GM12878 (cell line): ENCODE measurements at regions of chr2 and their contacts with region 1.

Region 1: GRCh38 chr2:28594289-28595108 is 98.6 kb downstream of the PLB1 start:
- DNase-seq: peak; percentile 28
- ATAC-seq: peak; percentile 94
- H3K4me3 ChIP-seq: no peak overlapping the region
- H3K27ac ChIP-seq: no peak overlapping the region
- H3K4me1 ChIP-seq: 0 out of 2 replicates have a peak, but pooled peaks cover 3% of the 10 kb centered on the region
- H3K27me3 ChIP-seq: no peaks in the 10 kb centered on the region; a peak in 1 of 4 replicates
- CTCF ChIP-seq: peak; percentile 78 to 86 (median 79)
- EP300 ChIP-seq: no peak
- POLR2A ChIP-seq: no peak
- RAD21 ChIP-seq: peak; percentile 90

Region 2: GRCh38 chr2:28566521-28567041 is 27.9 kb before region 1 on chr2:
- CTCF ChIA-PET with region 1: interaction called, 36 read pairs
- POLR2A ChIA-PET with region 1: no interaction called
- RAD21 ChIA-PET with region 1: interaction called, 10 read pairs
- SMC1A ChIA-PET with region 1: interaction called, 22 read pairs
- in situ Hi-C with region 1: no loop called
- intact Hi-C with region 1: no loop called
- DNase-seq: peak; percentile 8
- ATAC-seq: peak; percentile 99
- H3K4me3 ChIP-seq: peak overlapping the region; percentile 87
- H3K27ac ChIP-seq: no peak overlapping the region
- H3K4me1 ChIP-seq: peaks cover 3% of the 10 kb centered on the region; the same call in 1 of the 2 replicates
- H3K27me3 ChIP-seq: no peaks in the 10 kb centered on the region; a peak in 1 of 4 replicates
- CTCF ChIP-seq: peak; percentile 98 to 100 (median 100); a peak in 5 of 6 replicates
- EP300 ChIP-seq: no peak
- POLR2A ChIP-seq: no peak
- RAD21 ChIP-seq: peak; percentile 91

Region 3: DNA sequence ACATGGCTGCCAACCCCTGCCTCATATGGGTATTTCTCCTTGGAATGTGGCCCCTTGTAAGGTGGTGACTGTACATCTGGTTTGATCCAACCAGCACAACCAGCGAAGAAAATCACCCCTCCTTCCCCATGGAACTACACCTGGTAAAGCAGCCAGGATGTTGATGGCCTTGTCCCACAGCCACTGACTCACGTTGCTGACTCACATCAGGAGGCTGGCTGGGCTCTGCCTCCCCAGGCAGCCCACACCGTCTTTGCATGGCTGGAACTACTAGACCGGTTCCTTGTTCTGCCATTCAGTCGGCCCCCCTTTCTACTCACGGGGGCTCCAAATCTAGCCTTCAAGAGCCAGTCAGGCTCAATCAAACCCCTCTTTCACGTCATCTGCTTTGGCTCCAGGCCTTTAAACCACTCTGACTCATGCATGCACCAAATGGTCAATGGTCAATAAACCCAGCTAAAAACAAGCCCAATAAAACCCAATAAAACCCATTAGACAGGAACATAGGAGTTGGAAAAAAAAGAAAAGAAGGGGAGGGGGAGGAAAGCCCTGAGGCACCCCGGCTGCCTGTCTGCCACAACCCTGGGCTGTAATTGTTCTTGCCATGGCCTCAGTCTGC is 16.2 kb after region 1 on chr2:
- CTCF ChIA-PET with region 1: interaction called, 30 read pairs
- POLR2A ChIA-PET with region 1: no interaction called
- RAD21 ChIA-PET with region 1: interaction called, 3 read pairs
- SMC1A ChIA-PET with region 1: interaction called, 5 read pairs
- in situ Hi-C with region 1: no loop called
- intact Hi-C with region 1: no loop called
- DNase-seq: no peak
- ATAC-seq: peak; percentile 86
- H3K4me3 ChIP-seq: no peak overlapping the region
- H3K27ac ChIP-seq: no peak overlapping the region
- H3K4me1 ChIP-seq: no peaks in the 10 kb centered on the region
- H3K27me3 ChIP-seq: no peaks in the 10 kb centered on the region; a peak in 2 of 4 replicates
- CTCF ChIP-seq: no peak
- EP300 ChIP-seq: no peak
- POLR2A ChIP-seq: no peak
- RAD21 ChIP-seq: no peak

Region 4: GRCh38 chr2:28670866-28671265 is 76.4 kb after region 1 on chr2:
- CTCF ChIA-PET with region 1: interaction called, 10 read pairs
- POLR2A ChIA-PET with region 1: no interaction called
- RAD21 ChIA-PET with region 1: no interaction called
- SMC1A ChIA-PET with region 1: interaction called, 6 read pairs
- in situ Hi-C with region 1: no loop called
- intact Hi-C with region 1: no loop called
- DNase-seq: no peak
- ATAC-seq: no peak
- H3K4me3 ChIP-seq: no peak overlapping the region
- H3K27ac ChIP-seq: no peak overlapping the region
- H3K4me1 ChIP-seq: no peaks in the 10 kb centered on the region
- H3K27me3 ChIP-seq: peaks cover 0 to 1% of the 10 kb centered on the region in 2 experiments; a peak in 1 of 4 replicates
- CTCF ChIP-seq: no peak
- EP300 ChIP-seq: no peak
- POLR2A ChIP-seq: no peak
- RAD21 ChIP-seq: no peak

Region 5: GRCh38 chr2:28736034-28736433 is 141.5 kb after region 1 on chr2:
- CTCF ChIA-PET with region 1: interaction called, 18 read pairs
- POLR2A ChIA-PET with region 1: no interaction called
- RAD21 ChIA-PET with region 1: interaction called, 3 read pairs
- SMC1A ChIA-PET with region 1: no interaction called
- in situ Hi-C with region 1: no loop called
- intact Hi-C with region 1: no loop called
- DNase-seq: no peak
- ATAC-seq: no peak
- H3K4me3 ChIP-seq: no peak overlapping the region
- H3K27ac ChIP-seq: no peak overlapping the region
- H3K4me1 ChIP-seq: no peaks in the 10 kb centered on the region
- H3K27me3 ChIP-seq: no peaks in the 10 kb centered on the region
- CTCF ChIP-seq: no peak
- EP300 ChIP-seq: no peak
- POLR2A ChIP-seq: no peak
- RAD21 ChIP-seq: no peak

Region 6: GRCh38 chr2:28761420-28761819 is 166.9 kb after region 1 on chr2:
- CTCF ChIA-PET with region 1: interaction called, 155 read pairs
- POLR2A ChIA-PET with region 1: interaction called, 16 read pairs
- RAD21 ChIA-PET with region 1: interaction called, 4 read pairs
- SMC1A ChIA-PET with region 1: interaction called, 36 read pairs
- in situ Hi-C with region 1: no loop called
- intact Hi-C with region 1: no loop called
- DNase-seq: no peak
- ATAC-seq: peak; percentile 40
- H3K4me3 ChIP-seq: no peak overlapping the region
- H3K27ac ChIP-seq: no peak overlapping the region
- H3K4me1 ChIP-seq: no peaks in the 10 kb centered on the region
- H3K27me3 ChIP-seq: no peaks in the 10 kb centered on the region
- CTCF ChIP-seq: no peak
- EP300 ChIP-seq: no peak
- POLR2A ChIP-seq: no peak
- RAD21 ChIP-seq: no peak

Region 7: GRCh38 chr2:28801726-28802487 is 207.4 kb after region 1 on chr2:
- CTCF ChIA-PET with region 1: interaction called, 26 read pairs
- POLR2A ChIA-PET with region 1: no interaction called
- RAD21 ChIA-PET with region 1: interaction called, 5 read pairs
- SMC1A ChIA-PET with region 1: interaction called, 9 read pairs
- in situ Hi-C with region 1: no loop called
- intact Hi-C with region 1: no loop called
- DNase-seq: no peak
- ATAC-seq: no peak
- H3K4me3 ChIP-seq: no peak overlapping the region
- H3K27ac ChIP-seq: no peak overlapping the region
- H3K4me1 ChIP-seq: no peaks in the 10 kb centered on the region
- H3K27me3 ChIP-seq: no peaks in the 10 kb centered on the region
- CTCF ChIP-seq: no peak
- EP300 ChIP-seq: no peak
- POLR2A ChIP-seq: no peak
- RAD21 ChIP-seq: no peak